ENCODE measurements at regions of chr20 and their contacts with region 1.

Region 1: DNA sequence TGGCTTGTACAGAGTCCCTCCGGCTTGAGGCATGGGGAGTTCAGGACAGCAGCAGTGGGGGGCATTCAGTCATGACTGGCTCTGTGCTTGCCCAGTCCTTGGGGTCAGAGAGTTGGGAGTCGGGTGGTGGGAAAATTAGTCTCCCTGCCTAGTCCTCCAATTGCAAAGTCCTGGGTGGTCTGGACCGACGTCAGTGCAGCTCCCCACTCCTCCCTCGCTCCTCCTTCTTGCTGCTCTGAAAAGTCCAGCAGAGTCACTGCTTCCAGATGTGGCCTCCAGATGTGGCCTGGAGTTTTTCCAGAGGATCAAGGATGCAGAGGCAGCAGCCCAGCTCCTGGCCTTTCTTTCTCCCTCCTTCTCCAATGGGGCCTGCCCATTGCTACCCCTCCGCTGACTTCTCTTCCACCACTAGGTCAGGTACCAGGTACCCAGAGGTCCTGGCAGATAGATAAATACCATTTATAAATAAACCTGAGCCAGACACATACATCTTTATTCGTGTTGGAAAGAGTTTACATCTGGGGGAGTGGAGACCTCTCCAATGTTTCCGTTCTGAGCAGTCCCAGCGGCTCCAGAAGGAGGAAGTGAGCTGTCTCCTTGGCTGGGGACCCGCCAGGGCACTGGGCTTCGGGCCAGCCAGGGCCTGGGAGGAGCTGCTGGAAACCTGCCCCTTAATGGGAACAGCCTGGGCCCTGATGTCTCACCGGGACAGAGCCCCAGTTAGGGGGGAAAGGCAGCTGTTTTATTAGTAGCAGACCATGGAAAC is 49.0 kb upstream of the RNF24 start:
- DNase-seq: peak; percentile 87 to 98
- H3K4me3 ChIP-seq: no peak overlapping the region
- H3K27ac ChIP-seq: peak overlapping the region; percentile 93 to 94
- H3K4me1 ChIP-seq: peaks cover 23 to 64% of the 10 kb centered on the region in 2 donors
- H3K27me3 ChIP-seq: no peaks in the 10 kb centered on the region
- CTCF ChIP-seq: peak in 1 of 3 experiments; percentile 23

Region 2: GRCh38 chr20:4014031-4014474 is 50.3 kb before region 1 on chr20:
- intact Hi-C with region 1: loop called (anchors 2 kb)
- DNase-seq: peak in 1 of 2 donors; percentile 78
- H3K4me3 ChIP-seq: peak overlapping the region; percentile 91
- H3K27ac ChIP-seq: peak overlapping the region; percentile 91 to 95
- H3K4me1 ChIP-seq: peaks cover 6 to 12% of the 10 kb centered on the region in 2 donors
- H3K27me3 ChIP-seq: no peaks in the 10 kb centered on the region
- CTCF ChIP-seq: peak; percentile 43 to 54 (median 43)

Region 3: GRCh38 chr20:4358552-4358951 is 294.2 kb after region 1 on chr20:
- intact Hi-C with region 1: no loop called
- DNase-seq: no peak
- H3K4me3 ChIP-seq: no peak overlapping the region
- H3K27ac ChIP-seq: no peak overlapping the region
- H3K4me1 ChIP-seq: peaks cover 0 to 5% of the 10 kb centered on the region in 2 donors
- H3K27me3 ChIP-seq: no peaks in the 10 kb centered on the region
- CTCF ChIP-seq: no peak

Measured in ascending aorta (tissue), 2 donors.